Panc1 (cell line): ENCODE measurements at regions of chr1 and their contacts with region 1.

Region 1: DNA sequence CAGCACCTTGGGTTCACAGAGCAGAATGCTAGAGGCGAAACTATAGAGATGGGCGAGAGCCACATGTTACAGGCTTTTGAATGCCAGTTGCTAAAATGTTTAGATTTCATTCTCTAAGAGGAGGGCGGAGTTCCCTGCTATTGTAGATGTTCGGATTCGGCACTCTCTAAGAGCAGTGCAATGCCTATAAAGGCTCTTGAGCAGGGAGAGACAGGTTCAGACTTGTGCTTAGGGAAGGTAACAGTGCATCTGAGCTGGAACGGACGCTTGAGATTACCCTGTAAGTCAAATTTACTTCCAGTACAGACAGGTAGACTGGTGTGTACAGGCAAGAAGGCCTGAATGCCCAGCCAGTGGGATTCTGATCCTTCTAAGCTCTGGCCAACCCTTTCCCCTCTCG is 15.3 kb downstream of the LURAP1 start:
- DNase-seq: no peak
- ATAC-seq: no peak
- H3K4me3 ChIP-seq: no peak overlapping the region
- H3K27ac ChIP-seq: no peak overlapping the region
- H3K4me1 ChIP-seq: peaks cover 5% of the 10 kb centered on the region; the same call in 1 of the 2 replicates
- H3K27me3 ChIP-seq: no peaks in the 10 kb centered on the region
- CTCF ChIP-seq: no peak

Region 2: DNA sequence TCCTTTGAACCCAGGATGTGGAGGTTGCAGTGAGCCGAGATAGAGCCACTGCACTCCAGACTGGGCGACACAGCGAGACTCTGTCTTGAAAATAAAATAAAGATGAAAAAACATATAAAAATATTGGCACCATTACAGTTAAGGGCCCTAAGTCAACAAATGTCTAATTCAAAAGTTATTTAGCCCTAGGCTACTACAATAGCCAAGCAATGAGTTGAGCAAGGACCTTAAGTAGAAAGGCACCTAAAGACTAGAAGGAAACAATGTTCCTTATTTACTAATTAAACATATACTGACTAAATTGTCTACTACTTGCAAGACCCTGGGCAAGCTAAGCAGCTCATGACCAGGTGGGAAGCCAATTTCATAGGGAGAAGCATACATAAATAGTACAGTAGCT is 90.1 kb before region 1 on chr1:
- CTCF ChIA-PET with region 1: interaction called, 5 read pairs
- POLR2A ChIA-PET with region 1: interaction called, 10 read pairs
- in situ Hi-C with region 1: no loop called
- intact Hi-C with region 1: no loop called
- DNase-seq: no peak
- ATAC-seq: no peak
- H3K4me3 ChIP-seq: peak overlapping the region in 1 of 2 experiments; percentile 37; a peak in 2 of 4 replicates
- H3K27ac ChIP-seq: no peak overlapping the region
- H3K4me1 ChIP-seq: peaks cover 23% of the 10 kb centered on the region
- H3K27me3 ChIP-seq: no peaks in the 10 kb centered on the region
- CTCF ChIP-seq: no peak

Region 3: DNA sequence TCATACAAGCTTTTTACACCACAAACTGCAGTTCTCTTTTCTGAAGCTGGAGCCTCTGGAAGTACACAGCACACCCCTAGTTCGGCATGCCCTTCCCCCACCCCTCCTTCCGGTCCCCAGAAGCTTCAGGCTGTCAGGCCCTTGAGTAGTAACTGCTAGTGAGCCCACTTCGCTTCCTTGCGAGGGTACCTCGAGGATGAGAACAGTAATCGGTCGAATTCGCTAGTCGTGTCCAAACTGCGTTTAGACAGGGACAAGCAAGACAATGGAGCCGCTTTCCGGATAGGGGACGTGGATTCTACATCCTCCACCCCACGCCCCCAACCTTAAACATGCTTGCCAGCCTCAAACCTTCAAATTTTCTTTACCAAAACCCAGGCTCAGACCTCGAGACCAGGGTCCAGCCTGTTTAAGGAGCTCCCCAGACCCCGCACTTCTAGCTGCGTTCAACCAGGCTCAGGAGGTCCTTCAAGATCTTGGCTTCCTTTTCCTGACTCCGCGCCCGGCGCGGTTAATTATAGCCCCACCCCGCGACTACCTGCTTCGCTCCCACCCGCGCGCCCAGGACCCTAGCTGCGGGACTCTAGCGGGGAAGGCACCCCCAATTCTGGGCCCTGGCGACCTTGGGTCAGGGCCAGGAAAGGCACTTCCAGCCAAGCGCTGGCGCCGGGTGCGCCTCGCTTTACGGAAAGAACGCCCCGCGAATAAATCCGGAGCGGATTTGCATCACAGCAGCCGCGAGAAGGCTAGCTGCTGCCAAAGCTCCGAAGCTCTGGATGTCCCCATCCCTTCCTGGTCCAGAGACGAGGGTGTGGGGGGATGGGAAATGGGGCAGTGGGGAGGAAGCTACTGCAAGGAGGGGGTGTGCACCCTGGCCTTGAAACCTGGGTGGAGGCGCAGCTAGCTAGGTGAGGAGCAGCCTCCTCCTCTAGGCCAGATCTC is 51.7 kb before region 1 on chr1:
- CTCF ChIA-PET with region 1: no interaction called
- POLR2A ChIA-PET with region 1: no interaction called
- in situ Hi-C with region 1: no loop called
- intact Hi-C with region 1: no loop called
- DNase-seq: no peak
- ATAC-seq: no peak
- H3K4me3 ChIP-seq: no peak overlapping the region
- H3K27ac ChIP-seq: no peak overlapping the region
- H3K4me1 ChIP-seq: no peaks in the 10 kb centered on the region; the same call in 1 of the 2 replicates
- H3K27me3 ChIP-seq: no peaks in the 10 kb centered on the region
- CTCF ChIP-seq: no peak